ENCODE measurements at regions of chr17 and their contacts with region 1.

Region 1: DNA sequence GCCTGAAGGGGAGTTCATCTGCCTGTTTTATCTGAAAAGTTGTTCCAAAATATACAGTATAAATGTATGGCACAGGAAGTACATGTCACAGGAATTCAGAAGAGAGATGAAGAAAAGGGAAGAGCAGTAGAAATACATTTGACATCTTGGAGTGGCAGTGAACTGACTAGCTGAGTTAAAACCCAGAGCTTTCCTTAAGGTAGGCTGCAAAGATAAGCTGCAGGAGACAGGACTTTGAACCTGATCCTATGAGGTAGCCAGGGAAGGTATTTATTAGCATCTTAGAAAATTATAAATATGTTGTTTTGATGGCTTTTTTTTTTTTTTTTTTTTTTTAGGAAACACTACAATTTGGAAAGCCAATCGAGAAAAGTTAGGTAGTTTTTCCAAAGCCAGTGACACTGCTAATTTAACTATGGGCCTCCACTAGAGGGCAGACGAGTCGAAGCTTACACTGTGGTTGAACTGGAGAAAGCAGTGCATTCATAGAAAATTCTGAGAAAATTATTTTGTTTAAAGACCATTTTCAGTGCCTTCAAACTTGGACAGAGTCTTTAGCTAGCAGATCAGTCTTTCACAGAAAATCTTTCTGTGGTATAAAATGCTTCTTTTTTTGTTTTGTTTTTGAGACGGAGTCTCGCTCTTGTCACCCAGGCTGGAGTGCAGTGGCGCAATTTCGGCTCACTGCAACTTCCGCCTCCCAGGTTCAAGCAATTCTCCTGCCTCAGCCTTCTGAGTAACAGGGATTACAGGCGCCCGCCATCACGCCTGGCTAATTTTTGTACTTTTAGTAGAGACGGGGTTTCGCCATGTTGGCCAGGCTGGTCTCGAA is 122.3 kb downstream of the SSH2 start:
- DNase-seq: peak; percentile 82
- H3K4me3 ChIP-seq: no peak overlapping the region
- H3K27ac ChIP-seq: no peak overlapping the region
- H3K4me1 ChIP-seq: no peaks in the 10 kb centered on the region
- H3K27me3 ChIP-seq: no peaks in the 10 kb centered on the region
- CTCF ChIP-seq: peak; percentile 75

Region 2: DNA sequence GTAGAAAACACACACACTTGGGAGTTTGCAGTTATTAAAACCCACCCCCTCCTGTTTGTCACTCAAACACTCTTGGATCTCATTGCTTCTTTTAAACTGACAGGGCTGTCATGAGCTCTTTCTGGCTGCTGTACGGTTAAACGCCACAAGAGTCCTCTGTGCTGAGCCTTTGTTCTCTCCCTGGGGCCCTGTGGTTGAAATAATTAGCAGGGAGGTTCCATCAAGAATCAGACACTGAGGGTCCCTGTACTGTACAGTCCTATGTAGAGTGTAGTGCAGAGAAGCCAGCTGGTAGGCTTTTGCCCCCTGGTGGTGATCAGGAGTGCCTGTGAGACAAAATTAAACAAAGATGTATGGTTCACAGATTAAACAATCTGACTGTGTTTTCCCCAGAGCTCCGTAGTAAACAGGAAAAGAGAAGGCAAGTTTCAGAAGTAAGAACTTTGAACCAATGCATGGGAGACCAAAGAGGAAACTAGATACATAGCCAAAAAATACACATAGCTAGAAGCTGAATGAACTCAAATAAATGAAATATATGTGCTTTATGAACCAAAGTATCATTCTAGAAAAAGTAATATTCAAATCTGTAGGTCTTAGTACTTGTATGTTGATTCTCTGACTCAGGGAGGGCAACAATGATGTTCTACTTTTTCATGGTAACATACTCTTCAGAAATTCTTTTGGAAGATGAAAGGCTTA is 123.6 kb after region 1 on chr17:
- intact Hi-C with region 1: loop called (anchors 1 kb)
- DNase-seq: peak; percentile 75
- H3K4me3 ChIP-seq: peak overlapping the region; percentile 69
- H3K27ac ChIP-seq: peak overlapping the region; percentile 92
- H3K4me1 ChIP-seq: peaks cover 4% of the 10 kb centered on the region
- H3K27me3 ChIP-seq: no peaks in the 10 kb centered on the region
- CTCF ChIP-seq: peak; percentile 87

Region 3: GRCh38 chr17:30000001-30000754 is 192.4 kb after region 1 on chr17:
- intact Hi-C with region 1: loop called (anchors 10 kb)
- DNase-seq: no peak
- H3K4me3 ChIP-seq: no peak overlapping the region
- H3K27ac ChIP-seq: no peak overlapping the region
- H3K4me1 ChIP-seq: no peaks in the 10 kb centered on the region
- H3K27me3 ChIP-seq: no peaks in the 10 kb centered on the region
- CTCF ChIP-seq: no peak

Region 4: DNA sequence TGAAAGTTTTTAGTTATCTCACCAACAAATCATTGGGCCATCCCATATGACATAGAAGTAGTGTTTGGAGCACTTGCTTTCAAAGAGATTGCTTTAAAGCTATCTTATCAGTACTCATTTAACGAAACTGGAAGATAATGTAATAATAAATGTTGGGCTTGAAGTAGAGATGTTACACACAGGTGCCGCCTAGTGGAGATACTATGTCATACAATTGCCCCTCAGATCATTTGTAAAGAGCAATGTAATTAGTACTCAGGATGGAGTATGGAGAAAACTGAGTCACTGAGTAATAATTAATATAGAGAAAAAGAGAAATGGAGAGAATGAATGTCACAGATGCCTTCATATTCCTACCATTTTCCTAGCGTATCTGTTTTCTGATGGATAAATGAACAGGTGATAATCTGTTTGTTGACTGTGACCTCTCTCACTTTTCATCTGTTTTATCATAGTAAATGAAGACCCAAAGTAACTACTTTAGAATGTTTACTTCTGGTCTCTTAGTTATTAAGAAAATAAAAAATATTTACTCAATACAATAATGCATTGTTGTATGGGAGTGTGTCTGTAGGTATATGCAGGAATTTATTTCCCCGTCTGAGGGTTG is 214.1 kb after region 1 on chr17:
- intact Hi-C with region 1: loop called (anchors 5 kb)
- DNase-seq: peak; percentile 32
- H3K4me3 ChIP-seq: no peak overlapping the region
- H3K27ac ChIP-seq: no peak overlapping the region
- H3K4me1 ChIP-seq: no peaks in the 10 kb centered on the region
- H3K27me3 ChIP-seq: no peaks in the 10 kb centered on the region
- CTCF ChIP-seq: peak; percentile 80

Measured in colonic mucosa (tissue), 4 donors.